ENCODE measurements at regions of chr14 and their contacts with region 1.

Region 1: GRCh38 chr14:95442633-95443021 is 73.8 kb downstream of the SYNE3 start:
- DNase-seq: peak; percentile 44 to 52 (median 52)
- H3K4me3 ChIP-seq: no peak overlapping the region
- H3K4me3 Mint-ChIP-seq: no peak overlapping the region
- H3K27ac ChIP-seq: peak overlapping the region in 1 of 2 donors; percentile 14
- H3K27ac Mint-ChIP-seq: peak overlapping the region in 4 of 7 donors; percentile 0 to 89 (median 46)
- H3K4me1 ChIP-seq: no peaks in the 10 kb centered on the region
- H3K4me1 Mint-ChIP-seq: no peaks in the 10 kb centered on the region
- H3K27me3 ChIP-seq: no peaks in the 10 kb centered on the region
- H3K27me3 Mint-ChIP-seq: peaks cover 0 to 2% (median 0%) of the 10 kb centered on the region in 3 donors
- CTCF ChIP-seq: peak; percentile 92

Region 2: DNA sequence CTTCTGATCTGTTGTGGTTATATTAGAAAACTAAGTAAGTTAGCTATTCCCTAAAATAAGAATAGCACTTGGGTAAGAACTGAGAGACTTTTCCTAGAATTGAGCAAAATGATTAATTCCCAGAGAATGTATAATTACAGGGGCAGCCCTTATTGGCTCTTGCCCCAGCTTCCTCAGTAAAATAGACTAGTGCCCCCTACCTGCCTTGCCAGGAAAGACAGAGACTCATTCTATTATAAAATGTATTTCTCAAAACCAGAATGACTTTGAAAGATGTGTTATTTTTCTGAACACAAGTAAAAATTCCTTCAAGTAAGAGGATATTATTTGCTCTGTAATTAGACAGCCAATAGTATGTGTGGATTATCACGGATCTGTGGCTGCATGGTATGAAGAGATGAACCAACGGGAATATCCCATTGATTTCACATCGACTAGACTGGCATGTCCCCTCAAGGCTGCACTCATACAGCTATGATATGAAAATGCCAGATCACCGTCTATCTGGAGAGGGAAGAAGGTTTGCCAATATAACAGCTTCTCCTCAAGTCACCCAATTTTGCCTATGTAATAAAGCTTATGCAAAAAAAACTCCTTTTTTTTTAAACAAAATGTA is 84.9 kb after region 1 on chr14:
- intact Hi-C with region 1: loop called in 1 of 2 experiments (anchors 5 kb)
- DNase-seq: peak in 2 of 3 donors; percentile 53 to 61
- H3K4me3 ChIP-seq: no peak overlapping the region
- H3K4me3 Mint-ChIP-seq: no peak overlapping the region
- H3K27ac ChIP-seq: peak overlapping the region in 1 of 2 donors; percentile 6
- H3K27ac Mint-ChIP-seq: peak overlapping the region in 4 of 7 donors; percentile 8 to 71 (median 50)
- H3K4me1 ChIP-seq: peaks cover 38 to 55% of the 10 kb centered on the region in 2 donors
- H3K4me1 Mint-ChIP-seq: peaks cover 57% of the 10 kb centered on the region
- H3K27me3 ChIP-seq: no peaks in the 10 kb centered on the region
- H3K27me3 Mint-ChIP-seq: peaks cover 0 to 3% (median 0%) of the 10 kb centered on the region in 3 donors
- CTCF ChIP-seq: peak; percentile 87

Region 3: GRCh38 chr14:95534299-95535225 is 91.9 kb after region 1 on chr14 and contains the start of gene GLRX5:
- intact Hi-C with region 1: loop called (anchors 2 to 5 kb)
- DNase-seq: peak; percentile 99 to 100 (median 99)
- H3K4me3 ChIP-seq: peak within 1 kb of the TSS; percentile 73 to 90 (median 83)
- H3K4me3 Mint-ChIP-seq: peak within 1 kb of the TSS; percentile 93 to 96
- H3K27ac ChIP-seq: peak within 1 kb of the TSS; percentile 58 to 83
- H3K27ac Mint-ChIP-seq: peak within 1 kb of the TSS; percentile 88 to 95 (median 92)
- H3K4me1 ChIP-seq: peaks cover 28 to 34% of the 10 kb centered on the region in 2 donors
- H3K4me1 Mint-ChIP-seq: peaks cover 47% of the 10 kb centered on the region
- H3K27me3 ChIP-seq: no peaks in the 10 kb centered on the region
- H3K27me3 Mint-ChIP-seq: peaks cover 0 to 2% (median 0%) of the 10 kb centered on the region in 3 donors
- CTCF ChIP-seq: no peak
- polyA plus RNA-seq, gene GLRX5: 10.9 to 43.1 (median 31.1) TPM

Region 4: DNA sequence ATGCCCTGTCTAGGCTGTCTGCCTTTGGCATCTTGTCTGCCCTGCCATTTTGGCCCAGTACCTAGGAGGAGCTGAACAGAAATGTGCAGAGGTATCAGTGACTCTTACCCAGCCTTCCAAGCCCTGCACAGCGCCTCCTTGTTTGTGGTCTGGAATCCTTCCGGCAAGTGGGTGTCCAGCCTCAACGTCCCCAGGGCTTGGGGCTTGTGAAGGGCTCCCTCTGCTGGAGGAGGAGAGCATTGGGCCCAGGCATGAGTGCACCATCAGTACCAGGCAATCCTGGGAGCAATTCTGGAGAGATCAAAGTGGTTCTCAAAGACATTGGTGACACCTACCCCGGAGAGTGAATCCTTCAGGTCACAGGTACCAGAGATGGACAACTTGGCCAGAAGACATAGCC is 241.2 kb after region 1 on chr14:
- intact Hi-C with region 1: loop called in 1 of 2 experiments (anchors 10 kb)
- DNase-seq: peak in 1 of 3 donors; percentile 19
- H3K4me3 ChIP-seq: no peak overlapping the region
- H3K4me3 Mint-ChIP-seq: no peak overlapping the region
- H3K27ac ChIP-seq: no peak overlapping the region
- H3K27ac Mint-ChIP-seq: no peak overlapping the region
- H3K4me1 ChIP-seq: no peaks in the 10 kb centered on the region
- H3K4me1 Mint-ChIP-seq: no peaks in the 10 kb centered on the region
- H3K27me3 ChIP-seq: no peaks in the 10 kb centered on the region
- H3K27me3 Mint-ChIP-seq: peaks cover 4 to 9% (median 5%) of the 10 kb centered on the region in 3 donors
- CTCF ChIP-seq: peak; percentile 70

Measured in CD14-positive monocyte (primary cell).